ENCODE measurements at regions of chr1 and their contacts with region 1.

Region 1: DNA sequence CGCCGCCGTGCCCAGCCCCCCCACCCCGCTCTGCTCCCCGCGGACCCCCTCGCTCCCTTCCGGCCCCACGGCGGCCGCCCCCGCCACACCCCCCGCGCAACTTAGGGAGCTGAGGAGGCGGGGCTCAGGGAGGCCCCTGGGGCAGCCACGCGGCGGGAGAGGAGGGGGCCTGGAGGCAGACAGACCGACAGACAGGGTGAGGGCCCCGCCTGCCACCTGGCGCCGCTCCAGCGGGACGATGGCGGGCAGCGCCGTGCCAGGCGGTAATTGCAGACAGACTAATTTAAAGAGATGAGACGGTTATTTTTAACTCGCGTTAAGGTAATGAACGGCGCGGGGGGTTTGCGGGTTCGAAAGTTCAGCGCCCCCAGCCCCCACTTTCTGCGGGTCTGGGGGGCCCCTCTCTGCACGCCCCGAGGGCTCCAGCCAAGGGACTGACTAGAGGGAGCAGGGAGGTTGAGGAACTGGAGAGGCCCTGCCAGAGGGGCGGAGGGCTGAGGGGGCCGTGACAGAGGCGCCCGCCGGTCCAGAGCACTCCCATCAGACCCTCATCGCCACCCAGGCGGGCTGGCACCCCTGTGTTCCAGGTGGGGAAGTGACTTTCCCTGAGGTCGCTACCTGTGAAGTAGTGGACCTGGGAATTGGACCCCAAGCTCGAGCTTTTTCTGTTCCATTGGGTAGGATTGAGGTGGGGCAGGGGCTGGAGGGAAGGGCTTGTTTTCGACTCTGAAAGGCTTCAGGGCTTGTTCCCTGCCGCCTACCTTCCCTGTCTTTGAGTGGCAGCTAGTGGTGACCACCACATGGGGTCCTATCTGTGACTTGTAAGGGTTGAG is 5.4 kb downstream of the FOXO6 start:
- DNase-seq: no peak
- H3K4me3 Mint-ChIP-seq: no peak overlapping the region
- H3K27ac Mint-ChIP-seq: no peak overlapping the region
- H3K4me1 Mint-ChIP-seq: no peaks in the 10 kb centered on the region
- H3K27me3 Mint-ChIP-seq: peaks cover 62% of the 10 kb centered on the region

Region 2: DNA sequence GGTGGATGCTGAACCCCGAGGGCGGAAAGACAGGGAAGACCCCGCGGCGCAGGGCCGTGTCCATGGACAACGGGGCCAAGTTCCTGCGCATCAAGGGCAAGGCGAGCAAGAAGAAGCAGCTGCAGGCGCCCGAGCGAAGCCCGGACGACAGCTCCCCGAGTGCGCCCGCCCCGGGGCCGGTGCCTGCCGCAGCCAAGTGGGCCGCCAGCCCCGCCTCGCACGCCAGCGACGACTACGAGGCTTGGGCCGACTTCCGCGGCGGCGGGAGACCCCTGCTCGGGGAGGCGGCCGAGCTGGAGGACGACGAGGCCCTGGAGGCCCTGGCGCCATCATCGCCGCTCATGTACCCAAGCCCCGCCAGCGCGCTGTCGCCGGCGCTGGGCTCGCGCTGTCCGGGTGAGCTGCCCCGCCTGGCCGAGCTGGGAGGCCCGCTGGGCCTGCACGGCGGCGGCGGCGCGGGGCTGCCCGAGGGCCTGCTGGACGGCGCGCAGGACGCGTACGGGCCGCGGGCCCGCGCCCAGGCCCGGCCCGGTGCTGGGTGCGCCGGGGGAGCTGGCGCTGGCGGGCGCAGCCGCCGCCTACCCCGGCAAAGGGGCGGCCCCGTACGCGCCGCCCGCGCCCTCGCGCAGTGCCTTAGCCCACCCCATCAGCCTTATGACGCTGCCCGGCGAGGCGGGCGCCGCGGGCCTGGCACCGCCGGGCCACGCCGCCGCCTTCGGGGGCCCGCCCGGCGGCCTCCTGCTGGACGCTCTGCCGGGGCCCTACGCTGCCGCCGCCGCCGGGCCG is 15.2 kb after region 1 on chr1:
- intact Hi-C with region 1: loop called (anchors 2 kb)
- DNase-seq: no peak
- H3K4me3 Mint-ChIP-seq: peak overlapping the region; percentile 66
- H3K27ac Mint-ChIP-seq: no peak overlapping the region
- H3K4me1 Mint-ChIP-seq: peaks cover 7% of the 10 kb centered on the region
- H3K27me3 Mint-ChIP-seq: peaks cover 63% of the 10 kb centered on the region

Region 3: GRCh38 chr1:41455479-41456332 is 89.0 kb after region 1 on chr1:
- intact Hi-C with region 1: no loop called
- DNase-seq: no peak
- H3K4me3 Mint-ChIP-seq: no peak overlapping the region
- H3K27ac Mint-ChIP-seq: no peak overlapping the region
- H3K4me1 Mint-ChIP-seq: no peaks in the 10 kb centered on the region
- H3K27me3 Mint-ChIP-seq: peaks cover 2% of the 10 kb centered on the region

Region 4: DNA sequence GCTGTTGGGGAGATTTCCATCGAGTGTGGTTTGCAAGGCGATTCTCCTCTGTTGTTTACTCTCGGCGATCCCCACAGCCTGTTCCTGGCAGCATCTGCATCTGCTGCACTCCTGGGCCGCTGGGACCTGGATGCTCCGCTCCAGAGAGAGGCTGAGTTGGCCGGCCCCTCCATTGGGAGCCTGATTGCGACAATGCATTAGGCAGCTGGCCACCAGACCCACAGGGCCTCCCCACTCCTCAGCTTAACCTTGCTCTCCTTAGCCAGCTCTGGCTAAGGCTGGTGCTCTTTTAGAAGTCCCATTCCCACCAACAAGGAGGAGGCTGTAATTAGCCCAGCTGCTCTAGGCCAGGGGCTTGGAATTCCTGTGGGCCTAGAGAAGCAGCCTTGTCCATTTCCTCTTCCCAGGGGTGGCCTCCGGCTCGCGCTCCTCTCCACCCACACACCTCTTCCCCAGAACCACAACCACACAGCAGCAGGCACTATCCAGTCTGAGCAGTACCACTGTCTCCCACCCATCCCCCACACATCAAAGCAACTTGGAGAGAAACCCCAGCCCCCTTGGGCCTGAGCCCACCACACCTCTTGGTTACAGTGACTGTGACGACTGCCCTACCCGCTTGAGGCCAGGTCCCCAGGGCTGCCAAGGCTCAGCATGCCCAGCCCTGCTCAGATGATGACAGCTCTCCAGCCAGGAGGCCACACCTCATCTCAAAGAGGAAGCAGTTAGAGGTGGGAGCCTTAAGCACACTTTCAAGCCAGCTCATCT is 311.6 kb after region 1 on chr1:
- intact Hi-C with region 1: no loop called
- DNase-seq: no peak
- H3K4me3 Mint-ChIP-seq: peak overlapping the region; percentile 9
- H3K27ac Mint-ChIP-seq: peak overlapping the region; percentile 69
- H3K4me1 Mint-ChIP-seq: peaks cover 89% of the 10 kb centered on the region
- H3K27me3 Mint-ChIP-seq: no peaks in the 10 kb centered on the region